PC-3 (cell line): ENCODE measurements at regions of chr11 and their contacts with region 1.

Region 1: GRCh38 chr11:119356349-119357031 is 10.0 kb upstream of the MFRP start:
- DNase-seq: peak; percentile 70
- ATAC-seq: peak; percentile 41
- H3K4me3 ChIP-seq: peak overlapping the region; percentile 68
- H3K27ac ChIP-seq: no peak overlapping the region
- H3K4me1 ChIP-seq: peaks cover 23% of the 10 kb centered on the region
- H3K27me3 ChIP-seq: no peaks in the 10 kb centered on the region
- CTCF ChIP-seq: peak; percentile 92

Region 2: DNA sequence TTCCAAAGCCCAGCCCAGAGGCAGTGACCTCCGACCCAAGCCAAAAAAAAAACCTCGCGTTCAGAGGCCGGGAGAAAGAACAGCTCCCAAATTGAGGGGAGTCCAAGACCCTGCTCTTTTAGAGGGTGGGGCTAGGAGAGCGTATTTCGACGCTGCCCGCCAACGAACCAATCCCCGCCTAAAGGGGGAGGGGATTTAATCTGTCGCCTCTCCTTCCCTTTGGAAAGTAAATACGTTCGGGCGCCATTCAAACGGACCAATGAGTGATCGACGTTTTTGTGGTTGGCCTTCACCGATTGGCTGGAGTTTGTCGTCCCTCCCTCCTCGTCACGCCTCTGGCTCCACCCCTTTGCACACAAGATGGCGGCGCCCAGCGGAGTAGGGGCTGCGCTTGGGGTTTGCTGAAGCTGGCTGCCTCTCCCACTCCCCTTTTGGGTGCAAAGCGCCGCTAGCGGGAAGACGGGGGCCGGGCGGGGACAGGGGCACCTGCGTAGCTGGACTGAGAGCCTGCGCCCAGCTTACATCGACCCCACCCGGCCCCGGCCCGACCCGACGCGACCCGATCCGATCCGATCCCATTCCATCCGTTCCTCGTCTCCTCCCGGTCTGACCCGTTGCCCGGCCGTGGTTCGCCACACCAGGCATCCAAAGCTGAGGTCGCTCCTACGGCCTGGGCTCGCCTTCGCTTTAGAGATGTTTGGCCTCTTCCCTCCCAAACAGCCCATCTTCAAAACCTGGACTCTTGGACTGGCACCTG is 22.1 kb before region 1 on chr11 and contains the start of gene RNF26:
- CTCF ChIA-PET with region 1: interaction called, 13 read pairs
- POLR2A ChIA-PET with region 1: no interaction called
- intact Hi-C with region 1: no loop called
- DNase-seq: peak; percentile 99
- ATAC-seq: peak; percentile 80
- H3K4me3 ChIP-seq: peak within 1 kb of the TSS; percentile 87
- H3K27ac ChIP-seq: peak within 1 kb of the TSS; percentile 52
- H3K4me1 ChIP-seq: peaks cover 42% of the 10 kb centered on the region
- H3K27me3 ChIP-seq: no peaks in the 10 kb centered on the region
- CTCF ChIP-seq: no peak
- total RNA-seq, gene RNF26: 22.9 and 34.5 TPM in 2 replicates

Region 3: DNA sequence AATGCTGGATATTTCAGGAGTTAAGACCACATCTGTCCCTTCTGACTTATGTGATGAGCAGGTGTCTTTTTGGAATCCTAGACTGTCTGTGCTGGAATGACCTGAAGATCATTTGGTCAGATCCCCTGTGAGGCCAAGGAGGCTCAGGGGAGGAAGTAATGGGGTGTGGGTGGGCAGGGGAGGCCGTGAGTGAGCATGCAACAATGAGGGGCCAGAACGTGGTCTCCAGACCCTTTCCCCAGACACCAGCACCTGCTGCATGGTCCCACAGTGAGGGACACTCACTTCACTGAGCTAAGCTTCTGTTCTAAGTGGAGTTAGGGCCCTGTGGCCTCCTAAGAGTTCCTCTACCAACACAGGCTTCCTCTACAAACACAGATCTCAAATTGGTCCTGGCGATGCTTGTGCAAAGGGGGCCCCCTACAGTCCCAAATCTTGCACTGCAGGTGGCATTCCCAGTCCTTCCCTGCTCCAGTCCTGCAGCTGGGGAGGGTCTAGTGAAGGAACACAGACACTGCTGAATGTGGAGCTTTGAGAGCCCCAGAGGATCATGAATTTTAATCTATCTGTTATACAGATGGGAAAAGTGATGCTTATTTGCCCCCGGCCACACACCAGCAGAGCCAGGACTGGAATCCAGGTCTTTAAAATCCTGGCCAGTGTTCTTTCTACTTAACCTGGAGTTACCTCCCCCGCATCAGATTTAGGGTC is 17.6 kb after region 1 on chr11:
- CTCF ChIA-PET with region 1: interaction called, 15 read pairs
- POLR2A ChIA-PET with region 1: no interaction called
- intact Hi-C with region 1: loop called (anchors 1 kb)
- DNase-seq: peak; percentile 89
- ATAC-seq: peak; percentile 84
- H3K4me3 ChIP-seq: no peak overlapping the region
- H3K27ac ChIP-seq: no peak overlapping the region
- H3K4me1 ChIP-seq: peaks cover 14% of the 10 kb centered on the region
- H3K27me3 ChIP-seq: no peaks in the 10 kb centered on the region
- CTCF ChIP-seq: peak; percentile 98

Region 4: DNA sequence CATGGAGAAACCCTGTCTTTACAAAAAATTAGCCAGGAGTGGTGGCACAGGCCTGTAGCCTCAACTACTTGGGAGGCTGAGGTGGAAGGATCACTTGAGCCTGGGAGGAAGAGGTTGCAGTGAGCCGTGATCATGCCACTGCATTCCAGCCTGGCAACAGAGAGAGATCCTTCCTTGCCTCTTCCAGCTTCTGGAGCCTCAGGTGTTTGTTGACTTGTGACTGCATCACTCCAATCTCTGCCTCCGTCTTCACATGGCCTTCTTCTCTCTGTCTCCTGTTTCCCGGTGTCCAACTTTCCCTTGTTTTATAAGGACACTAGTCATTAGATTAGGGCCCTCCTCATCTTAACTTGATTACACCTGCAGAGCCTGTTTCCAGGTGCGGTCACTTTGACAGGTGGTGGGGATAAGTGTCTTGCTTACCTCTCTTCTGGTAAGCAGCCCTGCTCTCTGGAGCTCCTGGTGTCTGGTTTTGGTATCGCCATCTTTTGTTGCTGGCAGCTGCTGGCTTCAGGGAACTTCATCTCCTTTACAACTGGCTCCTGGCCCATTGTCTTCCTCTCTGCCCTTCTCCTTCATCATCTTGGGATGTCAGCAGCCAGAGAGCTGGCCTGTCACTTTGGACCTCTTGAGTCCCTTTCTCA is 33.2 kb after region 1 on chr11:
- CTCF ChIA-PET with region 1: interaction called, 15 read pairs
- POLR2A ChIA-PET with region 1: no interaction called
- intact Hi-C with region 1: no loop called
- DNase-seq: peak; percentile 61
- ATAC-seq: no peak
- H3K4me3 ChIP-seq: no peak overlapping the region
- H3K27ac ChIP-seq: no peak overlapping the region
- H3K4me1 ChIP-seq: peaks cover 8% of the 10 kb centered on the region; the same call in 1 of the 2 replicates
- H3K27me3 ChIP-seq: no peaks in the 10 kb centered on the region
- CTCF ChIP-seq: peak; percentile 55

Region 5: GRCh38 chr11:119474682-119475596 is 118.4 kb after region 1 on chr11:
- CTCF ChIA-PET with region 1: interaction called, 15 read pairs
- POLR2A ChIA-PET with region 1: no interaction called
- intact Hi-C with region 1: loop called (anchors 1 kb)
- DNase-seq: peak; percentile 86
- ATAC-seq: peak; percentile 50
- H3K4me3 ChIP-seq: no peak overlapping the region
- H3K27ac ChIP-seq: no peak overlapping the region
- H3K4me1 ChIP-seq: peaks cover 24% of the 10 kb centered on the region
- H3K27me3 ChIP-seq: no peaks in the 10 kb centered on the region
- CTCF ChIP-seq: peak; percentile 98